ENCODE measurements at regions of chr17 and their contacts with region 1.

Region 1: DNA sequence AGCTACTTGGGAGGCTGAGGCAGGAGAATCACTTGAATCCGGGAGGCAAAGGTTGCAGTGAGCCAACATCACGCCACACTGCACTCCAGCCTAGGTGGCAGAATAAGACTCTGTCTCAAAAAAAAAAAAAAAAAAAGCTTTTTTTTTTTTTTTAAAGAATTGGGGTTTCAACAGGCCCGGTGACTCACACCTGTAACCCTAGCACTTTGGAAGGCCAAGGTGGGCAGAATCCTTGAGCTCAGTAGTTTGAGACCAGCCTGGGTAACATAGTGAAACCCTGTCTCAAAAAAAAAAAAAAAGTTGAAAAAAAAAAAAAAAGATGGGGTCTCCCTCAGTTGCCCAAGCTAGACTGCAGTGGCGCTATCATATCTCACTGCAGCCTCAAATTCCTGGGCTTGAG is 6.6 kb upstream of the HEXIM2 start:
- DNase-seq: peak in 1 of 2 experiments; percentile 74
- H3K4me3 ChIP-seq: peak overlapping the region; percentile 36; the same call in 1 of the 2 replicates
- H3K27ac ChIP-seq: peak overlapping the region; percentile 75
- H3K4me1 ChIP-seq: peaks cover 72% of the 10 kb centered on the region
- H3K27me3 ChIP-seq: no peaks in the 10 kb centered on the region
- CTCF ChIP-seq: 0 out of 2 replicates have a peak, but pooled peaks have one; percentile 21

Region 2: DNA sequence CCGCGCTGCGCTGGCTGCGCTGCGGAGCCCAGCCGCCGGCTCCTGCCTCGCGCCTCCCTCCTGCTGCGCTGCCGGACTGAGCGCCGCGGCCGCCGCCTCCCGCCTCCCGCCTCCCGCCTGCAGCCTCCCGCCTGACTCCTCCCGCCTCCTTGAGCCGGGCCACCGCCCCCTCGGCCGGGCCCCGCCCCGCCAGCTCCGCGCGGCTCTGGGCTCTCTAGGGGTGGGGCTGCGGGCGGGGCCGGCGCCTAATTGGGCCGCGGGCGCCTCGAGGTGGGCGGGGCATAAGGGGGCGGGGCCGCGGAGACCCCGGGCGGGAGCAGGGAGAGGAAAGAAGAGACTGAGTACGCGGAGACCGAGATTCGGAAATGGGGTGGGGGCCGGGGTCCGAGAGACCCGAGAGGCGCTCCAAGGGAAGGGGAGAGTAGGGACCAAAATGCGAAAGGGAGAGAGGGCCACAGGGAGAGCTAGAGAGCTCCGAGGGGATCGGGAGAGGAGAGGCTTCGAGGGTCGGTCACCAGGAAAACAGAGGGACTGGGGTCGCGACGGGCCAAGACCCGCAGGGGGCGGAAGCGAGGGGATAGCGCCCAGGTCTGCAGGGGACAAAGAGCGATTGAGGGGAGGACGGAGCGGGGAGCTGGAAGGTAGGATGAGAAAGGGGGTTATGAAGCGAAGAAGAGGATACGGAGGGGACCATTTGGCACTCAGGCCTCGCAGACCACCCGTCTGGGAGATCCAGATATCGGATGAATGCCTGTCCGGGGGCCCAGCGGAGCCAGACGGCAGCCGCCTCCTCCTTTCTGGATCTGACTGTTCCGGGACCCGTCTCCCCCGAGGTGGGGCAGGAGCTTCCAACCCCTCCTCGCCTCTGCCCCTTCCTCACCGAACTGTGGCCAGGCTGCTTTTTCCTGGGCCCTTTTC is 186.5 kb before region 1 on chr17 and contains the start of gene C1QL1:
- CTCF ChIA-PET with region 1: no interaction called
- POLR2A ChIA-PET with region 1: interaction called, 14 read pairs
- intact Hi-C with region 1: no loop called
- DNase-seq: peak; percentile 63 to 89
- H3K4me3 ChIP-seq: peak within 1 kb of the TSS; percentile 47
- H3K27ac ChIP-seq: no peak within 1 kb of the TSS
- H3K4me1 ChIP-seq: no peaks in the 10 kb centered on the region
- H3K27me3 ChIP-seq: peaks cover 17% of the 10 kb centered on the region; the same call in 1 of the 2 replicates
- CTCF ChIP-seq: no peak
- total RNA-seq, gene C1QL1: 0.93 and 1.3 TPM in 2 replicates

Region 3: DNA sequence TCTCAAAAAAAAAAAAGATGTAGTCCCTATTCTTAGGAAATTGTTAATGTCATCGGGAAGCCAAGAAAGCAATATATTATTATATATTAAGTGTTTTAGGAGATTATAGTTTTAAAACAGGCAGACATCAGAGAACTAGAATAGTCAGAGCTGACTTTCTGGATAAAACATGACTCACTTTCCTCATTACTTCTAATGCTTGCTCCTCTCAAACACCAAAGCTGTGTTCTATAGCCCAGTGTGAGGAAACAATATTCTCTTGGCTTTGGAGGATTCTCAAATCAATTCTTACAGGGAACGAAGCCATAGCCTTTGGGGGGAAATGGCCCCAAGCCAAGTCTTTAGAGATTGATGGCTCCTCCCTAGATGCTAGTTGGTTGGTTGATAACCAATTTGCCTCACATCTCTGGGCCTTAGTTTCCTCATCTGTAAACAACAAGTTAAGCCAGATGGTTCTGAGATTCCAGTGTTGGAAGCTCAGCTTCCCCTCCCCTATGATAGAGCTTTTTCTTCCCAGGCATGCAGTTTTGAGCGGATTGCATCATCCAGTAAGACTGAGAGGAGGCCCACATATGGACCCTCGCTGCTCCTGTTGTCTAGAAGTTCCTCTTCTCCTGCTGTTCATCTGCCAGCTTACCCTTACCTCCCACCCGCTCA is 81.5 kb before region 1 on chr17:
- CTCF ChIA-PET with region 1: no interaction called
- POLR2A ChIA-PET with region 1: interaction called, 12 read pairs
- intact Hi-C with region 1: no loop called
- DNase-seq: no peak
- H3K4me3 ChIP-seq: no peak overlapping the region
- H3K27ac ChIP-seq: no peak overlapping the region
- H3K4me1 ChIP-seq: peaks cover 4% of the 10 kb centered on the region; the same call in 1 of the 2 replicates
- H3K27me3 ChIP-seq: no peaks in the 10 kb centered on the region
- CTCF ChIP-seq: no peak

Region 4: DNA sequence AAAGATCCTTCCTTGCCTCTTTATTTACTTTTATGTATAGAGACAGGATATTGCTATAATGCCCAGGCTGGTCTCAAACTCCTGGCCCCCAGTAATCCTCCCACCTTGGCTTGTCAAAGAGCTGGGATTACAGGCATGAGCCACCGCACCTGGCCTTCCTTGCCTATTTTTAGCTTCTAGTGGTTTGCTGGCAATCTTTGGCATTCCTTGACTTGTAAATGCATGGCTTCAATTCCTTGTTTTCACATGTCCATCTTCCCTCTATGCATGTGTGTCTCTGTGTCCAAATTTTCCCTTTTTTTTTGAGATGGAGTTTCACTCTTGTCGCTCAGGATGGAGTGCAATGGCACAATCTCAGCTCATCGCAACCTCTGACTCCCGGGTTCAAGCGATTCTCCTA is 29.1 kb after region 1 on chr17:
- CTCF ChIA-PET with region 1: no interaction called
- POLR2A ChIA-PET with region 1: interaction called, 12 read pairs
- intact Hi-C with region 1: no loop called
- DNase-seq: no peak
- H3K4me3 ChIP-seq: no peak overlapping the region
- H3K27ac ChIP-seq: peak overlapping the region; percentile 37
- H3K4me1 ChIP-seq: peaks cover 15% of the 10 kb centered on the region
- H3K27me3 ChIP-seq: no peaks in the 10 kb centered on the region
- CTCF ChIP-seq: no peak

Region 5: GRCh38 chr17:45197555-45198334 is 42.7 kb after region 1 on chr17:
- CTCF ChIA-PET with region 1: interaction called, 66 read pairs
- POLR2A ChIA-PET with region 1: interaction called, 9 read pairs
- intact Hi-C with region 1: no loop called
- DNase-seq: peak; percentile 83 to 97
- H3K4me3 ChIP-seq: no peak overlapping the region
- H3K27ac ChIP-seq: peak overlapping the region; percentile 52
- H3K4me1 ChIP-seq: peaks cover 36% of the 10 kb centered on the region
- H3K27me3 ChIP-seq: no peaks in the 10 kb centered on the region
- CTCF ChIP-seq: peak; percentile 99

Region 6: GRCh38 chr17:45302649-45303173 is 147.7 kb after region 1 on chr17:
- CTCF ChIA-PET with region 1: no interaction called
- POLR2A ChIA-PET with region 1: no interaction called
- intact Hi-C with region 1: no loop called
- DNase-seq: no peak
- H3K4me3 ChIP-seq: no peak overlapping the region
- H3K27ac ChIP-seq: no peak overlapping the region
- H3K4me1 ChIP-seq: peaks cover 11% of the 10 kb centered on the region
- H3K27me3 ChIP-seq: no peaks in the 10 kb centered on the region
- CTCF ChIP-seq: no peak

Measured in PC-9 (cell line).